ENCODE measurements at regions of chr17 and their contacts with region 1.

Region 1: GRCh38 chr17:40290629-40291287 is 3.1 kb downstream of the CDC6 start:
- DNase-seq: peak in 1 of 2 donors; percentile 69
- ATAC-seq: peak; percentile 17

Region 2: GRCh38 chr17:40203131-40203530 is 87.6 kb before region 1 on chr17:
- intact Hi-C with region 1: loop called in 1 of 2 experiments (anchors 5 kb)
- DNase-seq: no peak
- ATAC-seq: peak; percentile 71

Region 3: DNA sequence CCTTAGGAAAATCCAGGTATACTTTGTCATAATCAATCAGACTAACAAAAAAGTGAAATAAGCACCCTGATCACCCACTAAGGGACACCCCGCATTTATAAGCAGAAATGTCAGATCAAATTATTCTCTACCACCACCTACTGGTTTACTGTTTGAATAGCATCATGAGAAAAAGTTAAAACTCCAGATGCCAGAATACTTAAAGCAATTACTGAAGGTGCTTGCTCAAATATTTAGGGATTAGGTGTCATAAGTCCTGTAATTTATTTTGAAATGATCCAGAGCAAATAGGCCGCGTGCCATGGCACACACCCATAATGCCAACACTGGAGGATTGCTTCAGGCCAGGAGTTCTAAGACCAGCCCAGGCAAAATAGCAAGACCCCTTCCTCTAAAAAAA is 124.6 kb after region 1 on chr17:
- intact Hi-C with region 1: no loop called
- DNase-seq: no peak
- ATAC-seq: no peak

Measured in left colon (tissue), 2 donors.